Common myeloid progenitor, CD34-positive (primary cell): ENCODE measurements at regions of chr2 and their contacts with region 1.

Region 1: DNA sequence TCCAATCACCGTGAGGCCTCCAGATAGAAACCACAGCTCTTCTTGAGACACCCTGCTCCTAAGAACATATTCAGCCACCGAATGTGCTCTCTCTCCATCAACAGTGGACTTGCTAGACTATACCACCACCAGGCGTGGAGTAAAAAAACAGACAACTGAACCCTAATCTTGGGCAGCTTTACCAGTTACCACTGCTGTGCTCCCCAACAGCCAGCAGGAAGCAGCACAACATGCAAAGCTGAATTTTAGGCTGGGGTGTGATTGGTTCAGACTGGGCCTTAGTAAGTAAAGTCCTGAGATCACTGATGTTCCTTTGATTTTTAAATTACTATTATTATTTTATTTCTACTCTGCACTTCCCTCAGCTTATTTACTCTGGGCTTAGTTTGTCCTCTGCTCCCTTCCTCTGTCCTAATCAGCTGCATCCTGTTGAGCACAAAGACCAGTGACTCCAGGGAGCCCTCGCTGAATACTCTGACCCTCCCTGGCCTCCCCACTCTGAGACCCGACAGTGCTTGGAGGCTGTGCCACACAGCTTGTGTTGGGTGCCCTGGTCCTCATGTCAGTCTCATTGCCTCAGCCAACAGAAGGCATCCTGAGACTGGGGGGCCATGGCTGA is 21.9 kb downstream of the MRPL35 start:
- DNase-seq: peak; percentile 77 to 86 (median 80)
- H3K4me3 ChIP-seq: no peak overlapping the region
- H3K27ac ChIP-seq: no peak overlapping the region
- H3K4me1 ChIP-seq: peaks cover 0 to 29% (median 7%) of the 10 kb centered on the region in 4 experiments
- H3K27me3 ChIP-seq: no peaks in the 10 kb centered on the region

Region 2: DNA sequence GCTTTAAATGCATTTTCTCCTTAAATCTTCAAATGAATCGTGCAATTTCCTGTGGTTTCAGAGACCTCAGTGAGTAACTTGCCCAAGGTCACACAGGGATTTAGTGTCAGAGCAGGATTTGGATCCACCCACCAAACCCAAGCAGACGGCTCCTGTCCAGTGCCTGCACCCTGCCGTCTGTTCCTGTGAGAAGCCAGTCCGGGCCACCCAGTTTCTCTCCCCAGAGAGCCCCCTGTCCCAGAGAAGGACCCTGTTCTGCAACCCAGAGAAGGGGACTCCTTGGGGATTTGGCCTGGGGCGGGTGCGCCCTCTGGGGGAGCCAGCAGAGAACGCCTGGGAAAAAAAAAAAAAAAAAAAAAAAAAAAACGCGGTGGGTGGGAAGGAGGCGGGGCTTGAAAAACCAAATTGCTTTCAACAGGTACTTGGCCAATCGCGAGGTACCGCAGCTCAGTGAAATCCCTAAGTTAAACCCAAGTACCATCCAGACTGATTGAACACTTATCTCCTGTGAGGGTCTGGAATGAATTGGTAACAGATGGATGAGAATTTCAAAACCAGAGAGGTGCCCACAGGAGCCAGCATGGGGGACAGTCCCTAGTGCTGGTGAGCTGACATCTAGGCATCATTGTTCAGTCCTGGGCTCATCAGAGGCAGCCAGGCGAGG is 147.1 kb after region 1 on chr2:
- CTCF ChIA-PET with region 1: interaction called, 30 read pairs
- POLR2A ChIA-PET with region 1: interaction called, 3 read pairs
- DNase-seq: peak; percentile 61 to 70 (median 64)
- H3K4me3 ChIP-seq: peak overlapping the region in 3 of 7 experiments; percentile 16 to 37 (median 20)
- H3K27ac ChIP-seq: no peak overlapping the region
- H3K4me1 ChIP-seq: peaks cover 5 to 30% (median 15%) of the 10 kb centered on the region in 4 experiments
- H3K27me3 ChIP-seq: no peaks in the 10 kb centered on the region